A549 (cell line): ENCODE measurements at regions of chr2 and their contacts with region 1.

Region 1: DNA sequence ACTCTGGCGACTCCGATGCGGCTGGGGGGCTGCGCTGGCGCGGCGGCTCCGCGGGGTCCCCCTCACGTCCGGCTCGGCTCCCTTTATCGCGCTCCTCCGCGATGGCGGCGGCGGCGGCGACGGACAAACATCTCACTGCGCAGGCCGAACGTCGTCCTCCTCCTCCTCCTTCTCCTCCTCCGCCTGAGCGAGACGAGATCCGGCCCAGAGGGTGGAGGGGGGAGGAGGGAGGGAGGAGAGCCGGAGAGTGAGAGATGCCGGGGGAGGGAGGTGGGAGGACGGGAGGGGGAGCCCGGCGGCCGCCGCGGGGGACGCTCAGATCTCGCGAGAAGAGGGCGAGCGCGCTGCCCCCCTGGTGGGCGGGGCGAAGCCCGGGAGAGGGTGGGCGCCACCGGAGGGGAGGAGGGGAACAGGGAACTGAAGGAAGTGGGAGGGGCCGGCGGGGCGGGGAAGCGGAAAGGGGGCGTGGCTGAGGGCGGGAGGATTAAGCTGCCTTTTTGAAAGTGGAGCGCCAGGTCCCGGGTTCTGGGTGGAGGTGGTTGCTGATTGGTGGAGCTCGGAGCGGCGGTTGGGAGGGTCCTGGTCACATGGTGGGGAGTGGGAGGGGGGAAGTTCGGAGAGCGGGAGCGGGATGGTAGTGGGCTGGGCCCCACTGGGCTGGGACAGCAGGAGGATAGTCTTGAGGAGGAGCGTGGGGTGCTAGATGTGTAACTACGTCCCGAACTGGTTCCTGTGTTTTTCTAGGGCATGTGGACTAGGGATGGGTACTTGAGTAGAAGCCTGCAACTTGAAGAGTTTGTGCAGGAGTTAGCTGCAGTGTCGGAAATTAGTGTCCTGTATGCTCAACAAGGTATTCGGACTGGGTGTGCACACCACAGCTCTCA is at the start of gene CUL3:
- DNase-seq: peak; percentile 88 to 99
- ATAC-seq: peak; percentile 93 to 99
- H3K4me3 ChIP-seq: peak within 1 kb of the TSS; percentile 57
- H3K27ac ChIP-seq: peak within 1 kb of the TSS; percentile 99
- H3K4me1 ChIP-seq: peaks cover 18% of the 10 kb centered on the region
- CTCF ChIP-seq: no peak
- EP300 ChIP-seq: no peak
- POLR2A ChIP-seq: peak; percentile 89
- RAD21 ChIP-seq: no peak
- polyA plus RNA-seq, gene CUL3: 73.9 and 79.3 TPM in 2 replicates

Region 2: GRCh38 chr2:224570328-224570993 is 15.0 kb before region 1 on chr2:
- CTCF ChIA-PET with region 1: interaction called, 3 read pairs
- POLR2A ChIA-PET with region 1: interaction called, 12 read pairs
- DNase-seq: no peak
- ATAC-seq: peak in 1 of 2 experiments; percentile 28; a peak in 1 of 6 replicates
- H3K4me3 ChIP-seq: no peak overlapping the region
- H3K27ac ChIP-seq: peak overlapping the region in 1 of 2 experiments; percentile 54; a peak in 1 of 6 replicates
- H3K4me1 ChIP-seq: peaks cover 64% of the 10 kb centered on the region
- CTCF ChIP-seq: no peak
- EP300 ChIP-seq: no peak
- POLR2A ChIP-seq: no peak
- RAD21 ChIP-seq: no peak